SK-N-SH (cell line): ENCODE measurements at regions of chr5 and their contacts with region 1.

Region 1: GRCh38 chr5:94893412-94894135 is 275.1 kb downstream of the SLF1 start:
- DNase-seq: peak; percentile 47
- H3K4me3 ChIP-seq: no peak overlapping the region
- H3K27ac ChIP-seq: peak overlapping the region in 1 of 2 experiments; percentile 75; a peak in 2 of 4 replicates
- H3K4me1 ChIP-seq: peaks cover 0 to 8% of the 10 kb centered on the region in 2 experiments; a peak in 2 of 4 replicates
- H3K27me3 ChIP-seq: no peaks in the 10 kb centered on the region
- CTCF ChIP-seq: peak; percentile 55
- EP300 ChIP-seq: peak in 1 of 2 experiments; percentile 46; a peak in 1 of 4 replicates
- RAD21 ChIP-seq: peak; percentile 94

Region 2: DNA sequence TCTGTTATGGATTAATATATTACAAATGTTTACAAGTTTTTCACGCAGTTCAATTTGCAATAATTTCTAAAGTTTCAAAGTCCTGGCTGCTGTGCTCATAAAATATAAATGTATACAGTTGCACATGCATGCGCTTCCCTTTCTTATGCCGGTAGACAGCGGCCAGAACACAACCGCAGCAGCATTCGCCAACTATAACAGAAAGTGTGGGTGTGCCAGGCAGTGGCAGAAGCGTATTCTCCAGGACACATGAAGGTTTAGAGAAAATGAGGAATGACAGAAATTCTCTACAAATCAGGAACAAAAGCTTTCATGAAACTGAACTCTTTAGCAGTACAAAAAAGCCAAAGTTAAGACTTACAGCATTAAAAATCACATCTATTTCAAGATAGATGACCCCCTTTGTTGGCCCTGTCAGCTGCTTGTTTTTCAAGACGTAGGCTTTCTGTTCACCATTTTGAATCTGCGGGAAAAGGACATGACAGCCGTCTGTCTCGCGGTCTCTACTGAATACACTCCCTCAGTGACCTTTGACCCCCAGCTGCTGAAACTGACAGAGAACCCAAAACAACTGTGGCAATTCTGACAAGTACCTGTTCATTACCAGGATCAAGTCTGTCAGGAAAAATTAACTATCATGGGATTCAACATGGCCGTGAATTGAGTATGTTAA is 22.9 kb before region 1 on chr5:
- CTCF ChIA-PET with region 1: interaction called, 13 read pairs
- POLR2A ChIA-PET with region 1: no interaction called
- DNase-seq: no peak
- H3K4me3 ChIP-seq: no peak overlapping the region
- H3K27ac ChIP-seq: no peak overlapping the region
- H3K4me1 ChIP-seq: no peaks in the 10 kb centered on the region
- H3K27me3 ChIP-seq: no peaks in the 10 kb centered on the region
- CTCF ChIP-seq: no peak
- EP300 ChIP-seq: no peak
- RAD21 ChIP-seq: no peak

Region 3: DNA sequence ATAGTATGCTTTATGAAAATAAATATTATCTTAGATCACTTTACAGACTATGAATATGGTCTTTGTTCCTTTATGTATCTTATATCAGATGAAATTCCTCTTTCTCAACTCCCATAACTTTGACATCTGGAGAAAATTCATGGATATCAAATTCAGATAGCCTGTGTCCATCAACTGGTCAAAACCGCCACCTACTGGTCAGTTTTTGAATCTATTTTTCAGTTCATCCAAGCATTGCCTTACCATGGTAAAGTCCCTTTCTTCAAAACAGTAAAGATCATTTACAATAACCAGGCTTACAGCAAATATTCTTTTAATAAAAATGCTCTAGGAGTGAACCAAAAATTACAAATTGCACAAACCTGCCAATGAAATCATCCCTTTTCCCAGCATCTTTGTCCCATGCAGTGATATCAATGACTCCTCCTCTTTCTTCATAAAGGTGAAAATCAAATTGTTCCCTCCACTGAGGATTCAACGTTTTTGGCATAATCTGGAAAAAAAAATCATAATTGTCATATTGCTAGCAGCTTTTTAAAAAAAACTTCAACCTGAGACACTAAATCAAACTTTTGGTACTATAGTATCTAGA is 15.4 kb after region 1 on chr5:
- CTCF ChIA-PET with region 1: interaction called, 10 read pairs
- POLR2A ChIA-PET with region 1: no interaction called
- DNase-seq: peak; percentile 43
- H3K4me3 ChIP-seq: no peak overlapping the region; a peak in 1 of 4 replicates
- H3K27ac ChIP-seq: no peak overlapping the region
- H3K4me1 ChIP-seq: no peaks in the 10 kb centered on the region
- H3K27me3 ChIP-seq: no peaks in the 10 kb centered on the region
- CTCF ChIP-seq: peak; percentile 81
- EP300 ChIP-seq: no peak
- RAD21 ChIP-seq: peak; percentile 78

Region 4: DNA sequence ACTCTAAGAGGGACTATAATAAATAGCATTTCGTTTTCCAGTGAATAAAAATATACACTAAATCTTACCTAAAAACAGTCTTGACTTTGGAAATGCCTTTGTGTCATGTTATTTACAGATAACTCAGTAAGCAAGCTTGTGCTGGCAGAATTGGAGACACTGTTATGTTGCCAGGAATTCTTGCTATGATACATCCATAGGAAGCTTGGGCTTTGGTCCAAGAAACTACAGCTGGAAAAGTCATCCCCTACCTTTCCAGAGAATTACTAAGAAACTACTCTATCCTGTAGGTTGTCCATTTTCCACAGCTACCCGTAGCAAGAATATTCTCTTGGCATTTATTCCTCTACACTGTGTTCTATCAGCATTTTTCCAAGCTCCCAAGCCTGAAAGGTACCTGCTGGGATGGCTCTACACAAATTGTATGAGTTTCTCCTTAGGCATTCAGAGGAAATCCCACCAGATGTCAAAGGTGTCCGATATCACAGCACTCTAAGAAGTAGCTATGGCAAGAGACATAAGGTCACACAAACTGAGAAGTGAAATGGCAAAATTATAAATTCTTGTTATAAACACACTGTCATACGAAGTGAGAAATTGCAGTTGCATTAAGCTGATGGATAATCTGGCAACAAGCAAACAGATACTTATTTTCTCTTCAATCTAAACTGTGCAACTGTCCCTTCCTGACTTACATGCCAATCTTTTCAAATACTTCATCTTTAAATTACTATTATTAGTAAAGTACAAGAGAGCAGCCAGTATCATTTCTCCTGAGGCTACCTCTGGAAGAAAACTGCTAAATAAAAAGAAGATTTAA is 322.8 kb after region 1 on chr5:
- CTCF ChIA-PET with region 1: no interaction called
- POLR2A ChIA-PET with region 1: no interaction called
- DNase-seq: no peak
- H3K4me3 ChIP-seq: no peak overlapping the region
- H3K27ac ChIP-seq: no peak overlapping the region
- H3K4me1 ChIP-seq: no peaks in the 10 kb centered on the region
- H3K27me3 ChIP-seq: no peaks in the 10 kb centered on the region
- CTCF ChIP-seq: no peak
- EP300 ChIP-seq: no peak
- RAD21 ChIP-seq: no peak